Activated CD4-positive, alpha-beta memory T cell treated with anti-CD3 and anti-CD28 coated beads, Interleukin-2, amount 10 ng/mL, durations not matched to agents 7 days and 5 days (primary cell): ENCODE measurements at regions of chr11 and their contacts with region 1.

Region 1: GRCh38 chr11:19723572-19724342 is 11.1 kb downstream of the NAV2 start:
- DNase-seq: peak; percentile 63
- H3K4me3 Mint-ChIP-seq: peak overlapping the region; percentile 2
- H3K27ac Mint-ChIP-seq: peak overlapping the region; percentile 82
- H3K4me1 Mint-ChIP-seq: peaks cover 23% of the 10 kb centered on the region
- H3K27me3 Mint-ChIP-seq: no peaks in the 10 kb centered on the region

Region 2: GRCh38 chr11:19642185-19643158 is 81.3 kb before region 1 on chr11:
- CTCF ChIA-PET with region 1: no interaction called
- POLR2A ChIA-PET with region 1: no interaction called
- DNase-seq: no peak
- H3K4me3 Mint-ChIP-seq: no peak overlapping the region
- H3K27ac Mint-ChIP-seq: no peak overlapping the region
- H3K4me1 Mint-ChIP-seq: no peaks in the 10 kb centered on the region
- H3K27me3 Mint-ChIP-seq: no peaks in the 10 kb centered on the region

Region 3: GRCh38 chr11:19683141-19683805 is 40.5 kb before region 1 on chr11:
- CTCF ChIA-PET with region 1: no interaction called
- POLR2A ChIA-PET with region 1: no interaction called
- DNase-seq: no peak
- H3K4me3 Mint-ChIP-seq: no peak overlapping the region
- H3K27ac Mint-ChIP-seq: no peak overlapping the region
- H3K4me1 Mint-ChIP-seq: no peaks in the 10 kb centered on the region
- H3K27me3 Mint-ChIP-seq: peaks cover 2% of the 10 kb centered on the region

Region 4: DNA sequence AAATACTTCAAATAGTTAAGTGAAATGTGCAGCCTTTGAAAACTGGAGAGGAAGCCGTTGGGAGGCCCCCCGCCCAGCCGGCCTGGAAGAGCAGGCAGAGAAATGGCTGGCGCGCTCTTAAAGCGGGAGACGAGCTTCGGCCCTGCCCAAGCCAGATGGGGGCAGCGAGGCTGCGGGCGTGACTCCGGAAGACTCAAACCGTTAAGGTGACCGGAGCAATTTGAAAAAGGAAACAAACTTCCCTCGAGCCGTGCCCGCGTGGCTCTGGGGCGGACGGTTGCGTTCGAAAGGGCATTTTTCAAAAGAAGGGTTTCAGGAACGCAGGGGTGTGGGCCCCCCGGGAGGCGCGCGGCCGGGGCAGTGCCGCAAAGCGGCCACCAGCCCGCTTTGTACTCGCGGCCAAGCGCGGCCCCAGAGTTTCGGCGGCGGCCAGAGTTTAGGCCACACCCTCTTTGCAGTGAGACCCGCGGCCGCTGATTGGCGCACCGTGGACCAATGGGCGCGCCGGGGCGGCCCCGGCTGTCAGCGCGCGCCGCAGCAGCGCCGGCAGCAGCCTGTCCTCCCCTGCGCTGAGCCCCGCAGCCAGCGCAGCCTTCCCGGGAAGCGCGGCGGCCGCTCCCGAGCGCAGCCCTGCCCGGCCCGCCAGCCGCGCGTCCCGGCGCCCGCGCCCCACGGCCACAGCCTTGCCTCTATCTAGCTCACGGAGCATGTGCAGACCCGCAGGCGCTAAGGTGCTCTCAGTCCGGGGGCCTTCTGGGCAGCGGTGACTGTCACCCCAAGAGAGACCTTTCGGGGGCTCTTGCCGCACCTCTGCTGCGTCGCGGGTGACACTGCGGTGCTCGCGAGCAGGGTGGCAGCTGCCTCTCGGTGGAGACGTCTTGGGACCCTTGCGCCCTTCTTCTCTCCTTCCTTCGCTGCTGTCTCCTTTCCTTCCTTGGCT is 11.2 kb before region 1 on chr11 and contains the start of gene NAV2:
- CTCF ChIA-PET with region 1: interaction called, 3 read pairs
- POLR2A ChIA-PET with region 1: interaction called, 42 read pairs
- DNase-seq: peak; percentile 85
- H3K4me3 Mint-ChIP-seq: peak within 1 kb of the TSS; percentile 92
- H3K27ac Mint-ChIP-seq: peak within 1 kb of the TSS; percentile 89
- H3K4me1 Mint-ChIP-seq: peaks cover 26% of the 10 kb centered on the region
- H3K27me3 Mint-ChIP-seq: peaks cover 44% of the 10 kb centered on the region
- total RNA-seq, gene NAV2: 0.53 to 0.70 TPM